Pancreas (tissue), 10 donors: ENCODE measurements at regions of chr14 and their contacts with region 1.

Region 1: GRCh38 chr14:54572316-54572715 is 5.4 kb downstream of the SAMD4A start:
- DNase-seq: no peak
- ATAC-seq: no peak
- H3K4me3 ChIP-seq: no peak overlapping the region
- H3K27ac ChIP-seq: no peak overlapping the region
- H3K4me1 ChIP-seq: peaks cover 0 to 4% (median 0%) of the 10 kb centered on the region in 3 donors
- H3K27me3 ChIP-seq: no peaks in the 10 kb centered on the region
- CTCF ChIP-seq: no peak

Region 2: DNA sequence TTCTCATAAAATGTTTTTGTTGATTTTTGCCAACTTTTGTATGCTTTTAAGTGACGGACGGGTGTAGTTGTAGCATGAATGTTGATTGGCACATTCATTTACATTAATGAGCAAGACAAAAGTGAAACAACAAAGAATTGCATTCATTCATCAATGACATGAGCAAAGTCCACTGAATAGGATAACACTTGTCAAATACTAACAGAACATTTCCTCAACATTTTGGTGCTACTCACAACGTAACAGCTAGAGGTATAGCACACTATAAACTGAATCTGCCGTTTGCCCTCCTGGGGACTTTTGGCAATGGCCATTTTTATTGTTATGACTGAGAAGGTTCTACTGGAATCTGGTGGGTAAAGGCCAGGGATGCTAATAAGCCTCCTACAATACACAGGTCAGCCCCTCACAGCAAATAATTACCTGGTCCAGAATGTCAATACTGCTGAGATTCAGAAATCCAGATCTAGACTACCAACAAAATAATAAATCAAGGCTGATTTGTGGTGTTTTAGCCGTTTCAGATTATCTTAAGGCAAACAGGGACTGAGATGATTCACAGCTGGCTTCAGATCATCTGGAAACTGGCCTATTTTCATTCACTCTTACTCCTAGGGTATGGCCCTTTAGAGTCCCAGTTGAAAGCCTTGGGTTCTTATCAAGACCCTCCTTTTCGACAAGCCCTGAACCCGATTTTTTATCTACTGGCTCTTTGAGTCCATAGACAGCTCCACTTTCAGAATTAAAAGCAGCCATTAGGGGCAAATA is 198.0 kb before region 1 on chr14:
- intact Hi-C with region 1: no loop called
- DNase-seq: no peak
- ATAC-seq: no peak
- H3K4me3 ChIP-seq: no peak overlapping the region
- H3K27ac ChIP-seq: no peak overlapping the region
- H3K4me1 ChIP-seq: no peaks in the 10 kb centered on the region
- H3K27me3 ChIP-seq: no peaks in the 10 kb centered on the region
- CTCF ChIP-seq: no peak

Region 3: GRCh38 chr14:54773171-54773975 is 201.1 kb after region 1 on chr14:
- intact Hi-C with region 1: loop called in 2 of 3 experiments (anchors 5 kb)
- DNase-seq: peak in 5 of 6 donors; percentile 64 to 74 (median 66)
- ATAC-seq: peak; percentile 90 to 93 (median 92)
- H3K4me3 ChIP-seq: no peak overlapping the region
- H3K27ac ChIP-seq: peak overlapping the region; percentile 35 to 80 (median 62)
- H3K4me1 ChIP-seq: peaks cover 0 to 7% (median 0%) of the 10 kb centered on the region in 3 donors
- H3K27me3 ChIP-seq: no peaks in the 10 kb centered on the region
- CTCF ChIP-seq: peak in 1 of 4 donors; percentile 43